Astrocyte of the cerebellum (primary cell): ENCODE measurements at regions of chr6 and their contacts with region 1.

Region 1: GRCh38 chr6:75266716-75267291 is 17.8 kb downstream of the TMEM30A start:
- DNase-seq: no peak
- H3K4me3 ChIP-seq: no peak overlapping the region
- CTCF ChIP-seq: peak; percentile 68

Region 2: GRCh38 chr6:75167325-75167724 is 99.5 kb before region 1 on chr6:
- in situ Hi-C with region 1: no loop called
- DNase-seq: no peak
- H3K4me3 ChIP-seq: no peak overlapping the region
- CTCF ChIP-seq: no peak

Region 3: GRCh38 chr6:75230484-75231325 is 36.1 kb before region 1 on chr6:
- in situ Hi-C with region 1: no loop called
- DNase-seq: no peak
- H3K4me3 ChIP-seq: no peak overlapping the region
- CTCF ChIP-seq: peak; percentile 90

Region 4: DNA sequence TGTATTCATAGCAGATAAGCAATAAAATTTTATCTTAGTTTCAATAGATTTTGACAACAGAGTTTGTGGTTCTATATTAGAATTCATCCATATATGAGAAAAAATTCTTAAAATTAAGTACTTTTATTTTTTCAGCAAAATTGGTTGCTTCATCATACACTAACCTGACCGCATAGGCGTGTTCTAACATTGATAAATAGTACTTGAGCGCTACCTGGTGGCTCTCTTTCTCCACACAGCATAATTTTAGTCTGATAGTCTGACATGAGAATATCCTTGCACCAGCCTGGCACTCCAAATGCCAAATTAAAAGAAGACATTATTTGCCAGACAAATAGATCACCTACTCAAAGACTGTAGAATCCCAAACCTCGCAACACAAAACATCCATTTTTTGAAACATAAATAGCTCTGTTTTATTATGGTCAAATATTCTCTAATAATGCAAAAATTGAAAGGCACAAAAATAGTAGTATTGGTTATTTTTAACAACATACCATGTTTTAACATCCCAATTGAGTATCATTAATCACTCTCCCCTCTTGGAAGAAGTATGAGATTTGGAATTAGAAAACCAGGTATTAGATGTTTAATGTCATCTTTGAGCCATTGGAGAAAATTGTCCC is 259.8 kb after region 1 on chr6:
- in situ Hi-C with region 1: loop called (anchors 25 kb)
- DNase-seq: peak; percentile 71
- H3K4me3 ChIP-seq: no peak overlapping the region
- CTCF ChIP-seq: peak; percentile 66